Caco-2 (cell line): ENCODE measurements at regions of chr18 and their contacts with region 1.

Region 1: DNA sequence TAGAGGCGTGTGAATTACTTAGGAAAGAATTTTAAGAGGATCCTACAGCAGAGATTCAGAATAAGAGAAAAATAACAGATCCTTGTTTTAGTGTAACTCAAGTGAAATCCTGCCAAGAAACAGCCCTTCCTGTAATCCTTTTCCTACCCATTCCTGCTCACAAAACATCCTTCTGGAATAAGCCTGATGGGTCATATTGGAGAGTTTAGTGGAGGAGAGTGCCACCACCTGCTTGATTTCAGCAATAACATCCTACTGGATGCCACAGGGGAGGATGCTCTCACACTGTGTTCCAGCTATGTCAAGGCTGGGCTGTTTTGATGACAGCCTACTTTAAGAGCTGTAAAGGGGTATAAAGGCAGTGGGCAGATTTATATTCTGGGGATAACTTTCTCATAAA is 54.8 kb upstream of the CCDC178 start:
- DNase-seq: peak in 1 of 2 experiments; percentile 6
- H3K4me3 ChIP-seq: no peak overlapping the region
- H3K4me3 Mint-ChIP-seq: no peak overlapping the region
- H3K27ac Mint-ChIP-seq: no peak overlapping the region
- H3K4me1 ChIP-seq: no peaks in the 10 kb centered on the region
- H3K4me1 Mint-ChIP-seq: no peaks in the 10 kb centered on the region
- H3K27me3 ChIP-seq: no peaks in the 10 kb centered on the region
- H3K27me3 Mint-ChIP-seq: no peaks in the 10 kb centered on the region
- CTCF ChIP-seq: peak in 1 of 2 experiments; percentile 9

Region 2: GRCh38 chr18:33097126-33097525 is 398.2 kb before region 1 on chr18:
- CTCF ChIA-PET with region 1: no interaction called
- POLR2A ChIA-PET with region 1: no interaction called
- intact Hi-C with region 1: no loop called
- DNase-seq: no peak
- H3K4me3 ChIP-seq: no peak overlapping the region
- H3K4me3 Mint-ChIP-seq: no peak overlapping the region
- H3K27ac Mint-ChIP-seq: no peak overlapping the region
- H3K4me1 ChIP-seq: no peaks in the 10 kb centered on the region
- H3K4me1 Mint-ChIP-seq: no peaks in the 10 kb centered on the region
- H3K27me3 ChIP-seq: no peaks in the 10 kb centered on the region
- H3K27me3 Mint-ChIP-seq: no peaks in the 10 kb centered on the region
- CTCF ChIP-seq: no peak

Region 3: GRCh38 chr18:33404244-33404873 is 90.9 kb before region 1 on chr18:
- CTCF ChIA-PET with region 1: no interaction called
- POLR2A ChIA-PET with region 1: no interaction called
- intact Hi-C with region 1: loop called (anchors 1 kb)
- DNase-seq: no peak
- H3K4me3 ChIP-seq: no peak overlapping the region
- H3K4me3 Mint-ChIP-seq: no peak overlapping the region
- H3K27ac Mint-ChIP-seq: no peak overlapping the region
- H3K4me1 ChIP-seq: no peaks in the 10 kb centered on the region
- H3K4me1 Mint-ChIP-seq: no peaks in the 10 kb centered on the region
- H3K27me3 ChIP-seq: no peaks in the 10 kb centered on the region
- H3K27me3 Mint-ChIP-seq: no peaks in the 10 kb centered on the region
- CTCF ChIP-seq: peak in 1 of 2 experiments; percentile 5